Right cardiac atrium (tissue), 5 donors: ENCODE measurements at regions of chr9 and their contacts with region 1.

Region 1: DNA sequence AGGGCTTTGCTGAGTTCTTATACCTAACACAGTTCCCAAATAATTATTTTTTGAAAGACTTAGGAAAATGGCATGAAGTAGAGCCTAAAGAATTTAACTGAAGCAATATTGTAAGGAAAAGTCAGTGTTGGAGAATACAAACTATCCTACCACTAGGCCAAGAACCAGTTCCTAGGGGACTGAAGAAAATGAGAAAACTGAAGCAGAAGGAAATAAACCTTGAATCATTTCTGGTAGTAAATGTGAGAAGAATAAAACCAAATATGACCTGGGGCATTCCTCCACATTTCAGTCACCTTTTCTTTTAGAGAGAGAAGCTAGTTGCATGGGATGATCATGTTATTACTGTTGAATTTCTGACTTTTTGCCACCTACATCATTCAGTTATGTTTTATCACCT is 1393.9 kb upstream of the C9orf72 start:
- DNase-seq: no peak
- ATAC-seq: no peak
- H3K4me3 ChIP-seq: no peak overlapping the region
- H3K27ac ChIP-seq: no peak overlapping the region
- H3K4me1 ChIP-seq: no peaks in the 10 kb centered on the region
- H3K27me3 ChIP-seq: no peaks in the 10 kb centered on the region

Region 2: GRCh38 chr9:28887188-28887884 is 79.9 kb before region 1 on chr9:
- intact Hi-C with region 1: loop called in 1 of 4 experiments (anchors 5 kb)
- DNase-seq: no peak
- ATAC-seq: no peak
- H3K4me3 ChIP-seq: no peak overlapping the region
- H3K27ac ChIP-seq: no peak overlapping the region
- H3K4me1 ChIP-seq: no peaks in the 10 kb centered on the region
- H3K27me3 ChIP-seq: no peaks in the 10 kb centered on the region